Adrenal gland (tissue), 19 donors: ENCODE measurements at regions of chr11 and their contacts with region 1.

Region 1: GRCh38 chr11:25981998-25982397 is 349.9 kb upstream of the ANO3 start:
- DNase-seq: peak in 2 of 7 donors; percentile 13 to 15
- H3K4me3 ChIP-seq: peak overlapping the region in 1 of 4 donors; percentile 30
- H3K27ac ChIP-seq: no peak overlapping the region
- H3K4me1 ChIP-seq: no peaks in the 10 kb centered on the region
- H3K27me3 ChIP-seq: no peaks in the 10 kb centered on the region
- CTCF ChIP-seq: peak; percentile 33 to 81 (median 68)
- POLR2A ChIP-seq: no peak

Region 2: DNA sequence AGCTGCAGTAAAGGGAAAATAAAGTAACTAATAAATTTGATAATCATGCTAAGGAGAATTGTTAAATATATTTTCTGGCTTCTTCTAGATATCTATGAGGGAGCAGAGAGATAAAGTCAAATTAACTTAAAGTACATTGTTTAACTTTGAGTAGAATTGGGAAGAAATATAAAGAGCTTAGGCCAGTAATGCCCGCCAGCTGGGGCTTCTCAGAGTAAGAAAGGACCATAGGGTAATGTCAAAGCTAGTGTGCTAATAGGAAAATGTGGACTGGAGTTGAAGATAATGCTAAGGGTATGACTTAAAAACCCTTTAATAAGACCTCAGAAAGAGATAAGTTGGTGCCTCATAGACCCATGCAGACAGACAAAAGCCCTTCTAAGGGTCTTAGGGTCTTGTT is 61.6 kb before region 1 on chr11:
- intact Hi-C with region 1: no loop called
- DNase-seq: no peak
- H3K4me3 ChIP-seq: no peak overlapping the region
- H3K27ac ChIP-seq: no peak overlapping the region
- H3K4me1 ChIP-seq: no peaks in the 10 kb centered on the region
- H3K27me3 ChIP-seq: no peaks in the 10 kb centered on the region
- CTCF ChIP-seq: no peak
- POLR2A ChIP-seq: no peak

Region 3: GRCh38 chr11:26134481-26135355 is 152.7 kb after region 1 on chr11:
- intact Hi-C with region 1: loop called in 1 of 2 experiments (anchors 10 kb)
- DNase-seq: no peak
- H3K4me3 ChIP-seq: no peak overlapping the region
- H3K27ac ChIP-seq: no peak overlapping the region
- H3K4me1 ChIP-seq: no peaks in the 10 kb centered on the region
- H3K27me3 ChIP-seq: no peaks in the 10 kb centered on the region
- CTCF ChIP-seq: peak in 2 of 6 experiments; percentile 17 to 29
- POLR2A ChIP-seq: no peak

Region 4: GRCh38 chr11:26227296-26227695 is 245.3 kb after region 1 on chr11:
- intact Hi-C with region 1: loop called (anchors 5 kb)
- DNase-seq: no peak
- H3K4me3 ChIP-seq: no peak overlapping the region
- H3K27ac ChIP-seq: no peak overlapping the region
- H3K4me1 ChIP-seq: no peaks in the 10 kb centered on the region
- H3K27me3 ChIP-seq: no peaks in the 10 kb centered on the region
- CTCF ChIP-seq: peak in 5 of 6 experiments; percentile 46 to 62 (median 56)
- POLR2A ChIP-seq: no peak

Region 5: DNA sequence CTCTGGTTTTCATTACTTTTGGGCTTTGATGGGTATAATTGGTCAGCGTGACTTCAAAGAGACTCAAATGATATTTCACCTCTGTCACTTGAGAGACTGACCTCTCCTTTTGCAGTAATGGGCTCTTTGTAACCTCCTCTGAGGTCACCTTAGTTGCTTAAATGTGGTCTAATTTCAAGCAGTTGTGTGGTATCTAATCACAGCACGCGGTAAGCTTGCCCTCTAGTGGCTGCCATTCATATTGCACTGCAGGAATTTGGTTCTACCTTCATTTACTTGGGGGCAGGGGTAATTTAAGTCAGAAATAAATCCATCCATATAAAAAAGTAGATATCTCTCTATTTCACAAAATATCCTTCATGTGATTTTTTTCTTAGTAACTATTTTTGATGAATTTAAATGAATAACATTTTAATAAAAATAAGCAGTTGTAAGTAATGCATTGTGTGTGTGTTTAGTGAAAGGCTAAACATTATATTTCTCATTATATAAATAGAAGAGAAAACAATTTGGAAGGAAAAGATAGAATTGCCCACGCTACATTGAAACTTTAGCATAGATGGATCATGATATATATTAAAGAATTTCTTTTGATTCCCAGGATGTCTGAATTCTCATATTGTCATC is 294.9 kb after region 1 on chr11:
- intact Hi-C with region 1: loop called in 1 of 2 experiments (anchors 5 kb)
- DNase-seq: peak in 6 of 7 donors; percentile 30 to 79 (median 55)
- H3K4me3 ChIP-seq: no peak overlapping the region
- H3K27ac ChIP-seq: no peak overlapping the region
- H3K4me1 ChIP-seq: no peaks in the 10 kb centered on the region
- H3K27me3 ChIP-seq: peaks cover 5% of the 10 kb centered on the region
- CTCF ChIP-seq: peak; percentile 81 to 94 (median 87)
- POLR2A ChIP-seq: no peak